Mammary epithelial cell (primary cell): ENCODE measurements at regions of chrX and their contacts with region 1.

Region 1: DNA sequence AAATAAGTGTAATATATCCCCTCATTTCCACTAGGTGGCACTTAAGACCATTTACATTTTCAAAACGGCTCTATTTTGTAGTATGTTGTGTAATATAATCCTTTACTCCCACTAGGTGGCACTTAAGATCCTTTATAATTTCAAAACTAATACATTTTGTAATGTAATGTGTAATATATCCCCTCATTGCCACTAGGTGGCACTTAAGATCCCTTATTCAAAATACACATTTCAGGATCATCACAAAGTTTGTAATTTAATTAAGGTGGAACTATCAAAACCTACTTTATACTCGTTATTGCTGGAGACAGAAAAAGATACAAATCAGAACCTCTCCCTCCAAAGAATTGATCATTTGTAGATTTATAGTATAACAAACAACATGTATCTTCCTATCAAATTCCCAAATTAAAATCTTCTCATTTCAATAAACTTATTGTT is 132.5 kb downstream of the ARHGAP6 start:
- DNase-seq: peak; percentile 64
- H3K4me3 ChIP-seq: no peak overlapping the region
- H3K27ac ChIP-seq: no peak overlapping the region
- H3K4me1 ChIP-seq: no peaks in the 10 kb centered on the region
- H3K27me3 ChIP-seq: peaks cover 3% of the 10 kb centered on the region
- CTCF ChIP-seq: peak; percentile 70 to 89

Region 2: GRCh38 chrX:11143931-11144678 is 389.1 kb before region 1 on chrX:
- CTCF ChIA-PET with region 1: no interaction called
- dilution Hi-C with region 1: no loop called
- in situ Hi-C with region 1: loop called (anchors 25 kb)
- intact Hi-C with region 1: loop called (anchors 1 kb)
- DNase-seq: peak; percentile 69
- H3K4me3 ChIP-seq: no peak overlapping the region
- H3K27ac ChIP-seq: no peak overlapping the region
- H3K4me1 ChIP-seq: no peaks in the 10 kb centered on the region
- H3K27me3 ChIP-seq: no peaks in the 10 kb centered on the region
- CTCF ChIP-seq: peak; percentile 54 to 70

Region 3: DNA sequence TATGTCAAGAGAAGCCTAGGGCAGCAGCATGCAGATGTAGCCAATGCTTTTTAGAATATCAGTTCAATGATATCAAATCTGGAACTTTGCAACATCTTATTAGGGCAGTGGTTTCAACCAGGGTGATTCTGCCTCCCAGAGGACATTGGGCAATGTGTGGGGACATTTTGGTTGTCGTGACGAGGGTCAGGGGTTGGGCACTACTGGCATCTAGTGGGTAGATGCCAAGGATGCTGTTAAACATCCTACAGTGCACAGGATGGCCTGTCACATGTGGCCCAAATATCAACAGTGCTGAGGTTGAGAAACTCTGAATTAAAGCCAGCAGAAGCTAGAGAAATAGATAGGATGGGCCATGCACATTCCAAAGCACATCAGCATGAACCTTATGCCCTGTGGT is 87.7 kb before region 1 on chrX:
- CTCF ChIA-PET with region 1: no interaction called
- dilution Hi-C with region 1: no loop called
- in situ Hi-C with region 1: no loop called
- intact Hi-C with region 1: no loop called
- DNase-seq: no peak
- H3K4me3 ChIP-seq: no peak overlapping the region
- H3K27ac ChIP-seq: no peak overlapping the region
- H3K4me1 ChIP-seq: no peaks in the 10 kb centered on the region
- H3K27me3 ChIP-seq: no peaks in the 10 kb centered on the region
- CTCF ChIP-seq: peak in 1 of 2 donors; percentile 2

Region 4: DNA sequence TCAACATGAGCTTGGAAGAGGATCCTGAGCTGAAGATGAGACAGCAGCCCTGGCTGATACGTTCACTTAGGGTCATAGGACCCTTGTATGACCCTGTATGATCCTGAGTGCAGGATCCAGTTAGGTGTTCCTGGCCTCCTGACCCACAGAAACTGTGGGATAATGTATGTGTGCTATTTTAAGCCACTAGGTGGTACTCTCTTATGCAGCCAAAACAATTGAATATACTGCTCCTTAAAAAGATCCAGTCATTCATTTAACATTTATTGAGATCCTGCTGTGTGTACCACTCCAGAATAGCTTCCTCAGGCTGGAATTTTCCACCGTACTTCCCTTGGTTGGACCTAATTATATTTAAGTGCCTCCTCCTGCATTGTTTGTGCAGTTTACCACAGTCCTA is 72.9 kb before region 1 on chrX:
- CTCF ChIA-PET with region 1: no interaction called
- dilution Hi-C with region 1: no loop called
- in situ Hi-C with region 1: no loop called
- intact Hi-C with region 1: loop called (anchors 1 kb)
- DNase-seq: no peak
- H3K4me3 ChIP-seq: no peak overlapping the region
- H3K27ac ChIP-seq: no peak overlapping the region
- H3K4me1 ChIP-seq: no peaks in the 10 kb centered on the region
- H3K27me3 ChIP-seq: no peaks in the 10 kb centered on the region
- CTCF ChIP-seq: peak; percentile 12 to 35

Region 5: GRCh38 chrX:11600578-11600977 is 67.3 kb after region 1 on chrX:
- CTCF ChIA-PET with region 1: no interaction called
- dilution Hi-C with region 1: no loop called
- in situ Hi-C with region 1: no loop called
- intact Hi-C with region 1: no loop called
- DNase-seq: no peak
- H3K4me3 ChIP-seq: no peak overlapping the region
- H3K27ac ChIP-seq: no peak overlapping the region
- H3K4me1 ChIP-seq: no peaks in the 10 kb centered on the region
- H3K27me3 ChIP-seq: no peaks in the 10 kb centered on the region
- CTCF ChIP-seq: no peak

Region 6: GRCh38 chrX:11758400-11759171 is 225.4 kb after region 1 on chrX:
- CTCF ChIA-PET with region 1: no interaction called
- dilution Hi-C with region 1: no loop called
- in situ Hi-C with region 1: loop called in 1 of 2 experiments (anchors 25 kb)
- intact Hi-C with region 1: no loop called
- DNase-seq: peak; percentile 69
- H3K4me3 ChIP-seq: peak overlapping the region; percentile 73 to 80 (median 79)
- H3K27ac ChIP-seq: peak overlapping the region; percentile 85
- H3K4me1 ChIP-seq: peaks cover 14% of the 10 kb centered on the region
- H3K27me3 ChIP-seq: no peaks in the 10 kb centered on the region
- CTCF ChIP-seq: peak; percentile 11 to 56

Region 7: DNA sequence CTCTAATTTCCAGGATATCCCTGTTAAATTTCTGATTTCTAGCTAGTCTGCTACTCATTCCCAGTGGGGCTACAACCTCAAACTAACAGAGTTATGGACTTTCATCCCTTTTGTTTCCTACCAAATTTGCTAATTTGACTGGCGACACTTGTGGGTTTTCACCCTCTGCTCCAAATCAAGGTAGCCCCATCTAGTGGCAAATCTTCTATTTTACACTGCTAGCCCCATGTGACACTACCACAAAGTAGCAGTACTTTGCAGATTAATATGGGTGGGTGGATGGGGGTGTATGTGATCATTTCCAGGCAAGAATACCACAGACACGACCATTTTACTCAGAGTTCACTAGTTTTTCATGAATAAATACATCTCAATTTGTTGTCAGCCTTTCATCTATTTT is 375.1 kb after region 1 on chrX:
- CTCF ChIA-PET with region 1: no interaction called
- dilution Hi-C with region 1: no loop called
- in situ Hi-C with region 1: no loop called
- intact Hi-C with region 1: loop called (anchors 1 kb)
- DNase-seq: peak; percentile 25
- H3K4me3 ChIP-seq: no peak overlapping the region
- H3K27ac ChIP-seq: no peak overlapping the region
- H3K4me1 ChIP-seq: no peaks in the 10 kb centered on the region
- H3K27me3 ChIP-seq: no peaks in the 10 kb centered on the region
- CTCF ChIP-seq: peak; percentile 63 to 64

Region 8: GRCh38 chrX:13357925-13358324 is 1824.7 kb after region 1 on chrX:
- CTCF ChIA-PET with region 1: no interaction called
- dilution Hi-C with region 1: no loop called
- in situ Hi-C with region 1: no loop called
- intact Hi-C with region 1: no loop called
- DNase-seq: peak; percentile 93
- H3K4me3 ChIP-seq: no peak overlapping the region
- H3K27ac ChIP-seq: peak overlapping the region; percentile 90
- H3K4me1 ChIP-seq: peaks cover 7% of the 10 kb centered on the region
- H3K27me3 ChIP-seq: no peaks in the 10 kb centered on the region
- CTCF ChIP-seq: no peak